ENCODE measurements at regions of chr11 and their contacts with region 1.

Region 1: GRCh38 chr11:112289588-112290492 is 29.2 kb upstream of the PLET1 start:
- DNase-seq: peak; percentile 77 to 86 (median 80)
- H3K4me3 ChIP-seq: peak overlapping the region; percentile 69
- H3K4me3 Mint-ChIP-seq: peak overlapping the region; percentile 64 to 81 (median 79)
- H3K27ac ChIP-seq: no peak overlapping the region
- H3K27ac Mint-ChIP-seq: peak overlapping the region in 5 of 8 donors; percentile 17 to 71 (median 54)
- H3K4me1 ChIP-seq: peaks cover 9% of the 10 kb centered on the region
- H3K4me1 Mint-ChIP-seq: peaks cover 12 to 20% (median 13%) of the 10 kb centered on the region in 3 donors
- H3K27me3 ChIP-seq: no peaks in the 10 kb centered on the region
- H3K27me3 Mint-ChIP-seq: no peaks in the 10 kb centered on the region

Region 2: DNA sequence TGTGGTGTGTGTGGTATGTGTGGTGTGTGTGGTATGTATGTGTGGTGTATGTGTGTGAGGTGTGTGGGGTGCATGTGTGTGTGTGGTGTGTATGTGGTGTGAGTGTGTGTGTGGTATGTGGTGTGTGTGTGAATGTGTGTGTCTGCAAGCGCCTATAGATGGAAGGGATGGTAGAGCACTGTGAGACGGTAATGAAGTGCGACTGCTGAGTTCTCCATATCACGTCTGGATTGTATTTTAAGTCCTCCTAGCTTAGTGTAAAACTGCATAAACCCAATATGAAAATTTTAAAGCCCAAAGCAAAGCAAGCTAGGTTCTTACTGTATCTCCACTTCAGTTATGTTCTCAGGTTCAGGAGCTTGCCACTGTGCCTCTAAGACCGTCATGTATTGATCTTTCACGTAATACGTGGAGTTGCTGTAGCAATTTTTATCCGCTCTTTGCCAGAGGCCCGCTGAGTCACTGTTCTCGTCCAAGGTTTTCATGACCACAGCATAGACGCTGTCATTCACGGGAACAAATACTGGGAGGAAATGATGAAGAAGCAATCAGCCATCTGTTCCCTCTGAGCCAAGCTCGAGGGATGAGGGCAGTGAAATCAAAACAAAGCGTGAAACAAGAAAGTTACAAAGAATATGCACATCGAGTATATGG is 34.6 kb before region 1 on chr11:
- CTCF ChIA-PET with region 1: no interaction called
- POLR2A ChIA-PET with region 1: no interaction called
- DNase-seq: no peak
- H3K4me3 ChIP-seq: no peak overlapping the region
- H3K4me3 Mint-ChIP-seq: no peak overlapping the region
- H3K27ac ChIP-seq: no peak overlapping the region
- H3K27ac Mint-ChIP-seq: no peak overlapping the region
- H3K4me1 ChIP-seq: no peaks in the 10 kb centered on the region
- H3K4me1 Mint-ChIP-seq: no peaks in the 10 kb centered on the region
- H3K27me3 ChIP-seq: no peaks in the 10 kb centered on the region
- H3K27me3 Mint-ChIP-seq: no peaks in the 10 kb centered on the region

Region 3: DNA sequence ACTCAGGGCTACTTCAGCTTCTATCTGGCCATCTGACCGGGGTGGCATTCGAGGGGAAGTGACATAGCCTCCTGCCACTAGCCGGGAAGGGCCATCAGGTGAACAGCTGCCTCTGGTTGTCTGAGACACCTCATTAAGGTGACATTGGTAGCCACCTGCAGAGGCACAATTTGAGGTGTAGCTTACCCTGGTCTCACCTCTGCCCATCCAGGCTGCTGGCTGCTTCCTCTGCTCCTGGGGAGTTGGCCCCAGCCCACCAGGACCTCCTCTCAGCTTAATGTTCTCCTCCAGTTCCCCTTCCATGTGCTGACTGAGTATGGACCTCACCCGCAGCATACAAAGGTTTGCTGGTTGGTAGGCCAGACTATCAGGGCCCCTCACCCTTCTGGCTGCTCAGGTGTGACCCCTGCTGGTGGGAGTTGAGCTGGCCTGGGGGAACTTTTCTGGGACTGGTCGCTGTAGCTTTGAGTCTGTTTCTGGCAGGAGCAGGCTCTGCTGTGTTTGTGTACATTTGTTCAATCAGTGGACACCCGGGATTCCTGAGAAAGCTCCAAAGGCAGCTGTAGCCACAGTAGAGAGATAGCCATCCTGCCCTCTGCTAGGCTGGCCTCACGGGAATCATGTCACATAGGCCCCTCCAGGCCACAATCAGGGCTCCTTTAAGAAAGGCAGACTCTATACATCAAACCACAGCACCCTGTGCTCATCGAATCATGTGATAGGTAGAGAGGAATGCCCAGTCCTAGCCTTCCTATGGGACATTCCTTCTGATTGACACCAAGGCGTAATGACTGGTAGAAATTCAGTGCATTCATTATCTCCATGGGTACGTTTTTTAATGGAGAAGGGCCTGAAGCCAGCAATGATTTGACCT is 265.9 kb after region 1 on chr11:
- CTCF ChIA-PET with region 1: interaction called, 16 read pairs
- POLR2A ChIA-PET with region 1: no interaction called
- DNase-seq: peak; percentile 24 to 59 (median 46)
- H3K4me3 ChIP-seq: no peak overlapping the region
- H3K4me3 Mint-ChIP-seq: peak overlapping the region in 2 of 7 donors; percentile 41 to 80
- H3K27ac ChIP-seq: no peak overlapping the region
- H3K27ac Mint-ChIP-seq: peak overlapping the region in 1 of 8 donors; percentile 87
- H3K4me1 ChIP-seq: no peaks in the 10 kb centered on the region
- H3K4me1 Mint-ChIP-seq: no peaks in the 10 kb centered on the region
- H3K27me3 ChIP-seq: no peaks in the 10 kb centered on the region
- H3K27me3 Mint-ChIP-seq: peaks cover 2 to 14% of the 10 kb centered on the region in 2 donors

Measured in CD8-positive, alpha-beta memory T cell (primary cell).